Activated CD8-positive, alpha-beta T cell treated with anti-CD3 and anti-CD28 coated beads for 36 hours (primary cell): ENCODE measurements at regions of chr1 and their contacts with region 1.

Region 1: GRCh38 chr1:11907275-11908094 is 18.7 kb downstream of the KIAA2013 start:
- DNase-seq: peak; percentile 94
- ATAC-seq: peak; percentile 65
- H3K4me3 Mint-ChIP-seq: peak overlapping the region; percentile 90
- H3K27ac Mint-ChIP-seq: peak overlapping the region; percentile 96
- H3K4me1 Mint-ChIP-seq: peaks cover 29% of the 10 kb centered on the region
- H3K27me3 Mint-ChIP-seq: peaks cover 14% of the 10 kb centered on the region
- CTCF ChIP-seq: peak; percentile 65

Region 2: GRCh38 chr1:11590395-11590794 is 317.1 kb before region 1 on chr1:
- CTCF ChIA-PET with region 1: no interaction called
- POLR2A ChIA-PET with region 1: no interaction called
- intact Hi-C with region 1: no loop called
- DNase-seq: no peak
- ATAC-seq: no peak
- H3K4me3 Mint-ChIP-seq: no peak overlapping the region
- H3K27ac Mint-ChIP-seq: no peak overlapping the region
- H3K4me1 Mint-ChIP-seq: no peaks in the 10 kb centered on the region
- H3K27me3 Mint-ChIP-seq: peaks cover 8% of the 10 kb centered on the region
- CTCF ChIP-seq: no peak

Region 3: GRCh38 chr1:11654137-11654938 is 253.1 kb before region 1 on chr1 and contains the starts of genes FBXO2 and FBXO44:
- CTCF ChIA-PET with region 1: no interaction called
- POLR2A ChIA-PET with region 1: interaction called, 32 read pairs
- intact Hi-C with region 1: no loop called
- DNase-seq: peak; percentile 76
- ATAC-seq: peak; percentile 74
- H3K4me3 Mint-ChIP-seq: peak within 1 kb of the TSS; percentile 72
- H3K27ac Mint-ChIP-seq: peak within 1 kb of the TSS; percentile 42
- H3K4me1 Mint-ChIP-seq: peaks cover 25% of the 10 kb centered on the region
- H3K27me3 Mint-ChIP-seq: no peaks in the 10 kb centered on the region
- CTCF ChIP-seq: no peak
- total RNA-seq, gene FBXO2: 1.7 to 1.9 TPM
- total RNA-seq, gene FBXO44: 18.1 to 20.4 TPM

Region 4: DNA sequence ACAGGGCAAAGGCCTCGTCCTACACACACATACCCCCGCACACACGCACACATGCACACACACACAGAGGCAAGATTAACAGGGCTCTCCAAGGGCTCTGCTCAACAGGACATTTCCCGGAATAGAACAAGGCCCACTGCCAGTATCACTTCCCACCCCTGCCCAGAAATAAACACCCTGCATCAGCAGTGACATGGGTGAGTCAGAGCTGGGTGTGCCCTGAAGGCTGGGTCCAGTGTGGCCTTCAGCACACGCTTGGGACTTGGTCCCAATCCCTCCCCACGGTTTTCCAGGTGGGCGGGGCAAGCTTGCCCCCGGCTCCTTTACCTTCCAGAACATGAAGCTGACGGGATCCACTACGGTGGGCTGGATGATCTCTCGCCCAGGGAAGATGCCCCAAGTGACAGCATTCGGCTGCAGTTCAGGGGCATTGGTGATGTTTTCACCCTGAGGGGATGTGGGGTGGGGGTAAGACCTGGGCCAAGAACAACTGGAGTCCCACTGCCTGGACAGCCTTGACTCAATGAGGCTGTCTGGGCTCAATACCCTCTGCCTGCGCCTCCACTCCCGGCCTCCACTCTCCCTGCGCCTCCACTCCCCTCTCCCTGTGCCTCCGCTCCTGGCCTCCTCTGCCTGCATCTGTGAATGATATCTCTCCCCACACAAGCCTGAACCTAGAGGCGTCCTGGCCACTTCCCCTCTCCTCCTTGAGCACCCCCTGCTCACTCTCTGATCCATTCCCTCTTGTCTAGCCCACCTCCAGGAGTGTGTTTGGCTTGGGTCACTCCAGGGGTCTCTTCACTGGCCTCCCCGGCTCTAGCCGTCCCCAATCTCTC is 116.4 kb before region 1 on chr1:
- CTCF ChIA-PET with region 1: no interaction called
- POLR2A ChIA-PET with region 1: interaction called, 17 read pairs
- intact Hi-C with region 1: no loop called
- DNase-seq: no peak
- ATAC-seq: no peak
- H3K4me3 Mint-ChIP-seq: no peak overlapping the region
- H3K27ac Mint-ChIP-seq: peak overlapping the region; percentile 46
- H3K4me1 Mint-ChIP-seq: no peaks in the 10 kb centered on the region
- H3K27me3 Mint-ChIP-seq: no peaks in the 10 kb centered on the region
- CTCF ChIP-seq: no peak

Region 5: DNA sequence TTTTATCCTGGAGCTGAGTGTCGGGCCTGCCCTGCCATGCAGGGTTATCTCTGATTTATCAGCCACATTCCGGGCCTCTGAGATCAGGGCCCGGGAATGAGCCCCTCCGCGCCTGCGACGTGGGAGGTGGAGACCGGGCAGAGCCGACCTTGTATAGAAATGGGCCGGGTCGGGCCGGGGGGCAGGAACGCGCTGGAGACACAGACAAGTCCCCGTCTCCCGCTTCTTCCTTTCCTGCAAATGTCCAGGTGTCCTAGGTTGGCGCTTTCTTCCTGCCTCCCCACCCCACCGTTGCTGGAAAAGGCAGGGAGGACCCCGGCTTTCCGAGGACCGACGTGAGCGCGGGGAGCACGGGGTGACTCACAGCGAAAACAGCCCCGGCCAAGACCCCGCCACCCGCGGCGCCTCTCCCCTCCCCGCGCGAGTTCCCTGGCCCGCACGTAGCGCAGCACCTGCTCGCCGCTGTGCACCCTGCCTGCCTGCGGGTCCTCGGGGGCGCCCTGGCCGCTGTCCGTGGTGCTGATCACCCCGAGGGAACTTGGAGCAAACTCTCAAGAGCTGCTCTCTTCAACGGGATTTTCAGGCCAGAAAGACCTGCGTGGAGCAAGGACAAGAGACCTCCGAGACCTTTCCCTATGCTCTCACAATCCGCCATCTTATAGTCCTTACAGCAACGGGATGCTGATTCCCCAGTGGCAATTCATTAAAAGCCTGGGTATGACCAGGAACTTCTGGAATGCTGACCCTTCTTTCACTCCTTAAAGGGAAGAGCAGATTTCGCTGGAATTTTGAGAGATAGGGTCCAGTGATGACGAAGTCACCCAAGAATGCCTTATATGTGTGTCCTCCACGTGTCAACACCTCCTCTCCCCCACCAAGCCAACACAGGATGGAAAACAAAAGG is 48.3 kb before region 1 on chr1:
- CTCF ChIA-PET with region 1: no interaction called
- POLR2A ChIA-PET with region 1: interaction called, 68 read pairs
- intact Hi-C with region 1: no loop called
- DNase-seq: peak; percentile 83
- ATAC-seq: peak; percentile 91
- H3K4me3 Mint-ChIP-seq: no peak overlapping the region
- H3K27ac Mint-ChIP-seq: no peak overlapping the region
- H3K4me1 Mint-ChIP-seq: peaks cover 5% of the 10 kb centered on the region
- H3K27me3 Mint-ChIP-seq: peaks cover 46% of the 10 kb centered on the region
- CTCF ChIP-seq: peak; percentile 21

Region 6: GRCh38 chr1:11957398-11957797 is 49.9 kb after region 1 on chr1:
- CTCF ChIA-PET with region 1: no interaction called
- POLR2A ChIA-PET with region 1: interaction called, 13 read pairs
- intact Hi-C with region 1: no loop called
- DNase-seq: no peak
- ATAC-seq: no peak
- H3K4me3 Mint-ChIP-seq: no peak overlapping the region
- H3K27ac Mint-ChIP-seq: no peak overlapping the region
- H3K4me1 Mint-ChIP-seq: no peaks in the 10 kb centered on the region
- H3K27me3 Mint-ChIP-seq: no peaks in the 10 kb centered on the region
- CTCF ChIP-seq: no peak

Region 7: DNA sequence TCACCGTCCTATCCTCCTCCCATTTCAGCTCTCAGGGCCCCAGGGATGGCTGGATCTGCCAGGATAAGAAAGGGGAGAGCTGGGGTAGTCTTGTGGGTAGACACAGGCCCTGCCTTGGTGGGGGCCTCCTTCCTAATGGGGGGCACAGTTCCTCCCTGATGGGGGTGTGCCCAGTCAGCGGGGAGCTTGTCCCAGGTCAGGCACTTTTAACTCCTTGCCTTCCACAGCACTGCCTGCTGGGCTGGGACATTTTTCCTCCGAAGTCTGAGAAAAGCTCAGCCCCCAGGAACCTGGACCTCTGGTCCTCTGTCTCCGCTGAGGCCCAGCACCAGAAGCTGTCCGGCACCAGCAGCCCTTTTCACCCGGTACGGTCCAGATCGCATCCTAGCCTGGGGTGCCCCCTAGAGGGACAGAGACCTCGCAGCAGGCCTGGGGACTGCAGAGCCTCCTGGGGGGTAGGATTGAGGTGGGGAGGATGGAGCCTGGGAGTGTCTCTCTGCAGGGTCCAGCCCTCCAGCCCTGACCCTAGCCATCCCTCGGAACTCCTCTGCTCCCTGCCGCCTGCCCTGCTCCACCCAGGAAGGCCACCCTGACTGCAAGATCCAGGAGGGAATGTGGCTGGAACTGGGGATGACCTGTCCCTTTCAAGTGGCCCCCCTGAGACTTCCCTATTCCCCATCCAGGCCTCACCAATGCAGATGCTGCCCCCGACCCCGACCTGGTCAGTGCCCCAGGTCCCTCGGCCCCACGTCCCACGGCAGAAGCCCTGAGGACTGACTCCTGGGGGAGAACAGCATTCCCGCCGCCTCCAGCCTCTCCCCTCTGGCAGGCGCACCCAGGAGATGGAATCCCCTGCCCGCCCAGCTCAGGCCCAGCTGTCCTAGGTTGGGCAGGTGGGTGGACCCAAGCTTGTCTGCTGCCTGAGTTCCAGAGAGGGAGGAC is 123.8 kb after region 1 on chr1:
- CTCF ChIA-PET with region 1: interaction called, 4 read pairs
- POLR2A ChIA-PET with region 1: interaction called, 49 read pairs
- intact Hi-C with region 1: no loop called
- DNase-seq: peak; percentile 67
- ATAC-seq: peak; percentile 96
- H3K4me3 Mint-ChIP-seq: no peak overlapping the region
- H3K27ac Mint-ChIP-seq: no peak overlapping the region
- H3K4me1 Mint-ChIP-seq: no peaks in the 10 kb centered on the region
- H3K27me3 Mint-ChIP-seq: no peaks in the 10 kb centered on the region
- CTCF ChIP-seq: peak; percentile 69

Region 8: GRCh38 chr1:12124693-12125421 is 217.4 kb after region 1 on chr1:
- CTCF ChIA-PET with region 1: no interaction called
- POLR2A ChIA-PET with region 1: interaction called, 10 read pairs
- intact Hi-C with region 1: no loop called
- DNase-seq: peak; percentile 85
- ATAC-seq: peak; percentile 49
- H3K4me3 Mint-ChIP-seq: no peak overlapping the region
- H3K27ac Mint-ChIP-seq: peak overlapping the region; percentile 73
- H3K4me1 Mint-ChIP-seq: peaks cover 60% of the 10 kb centered on the region
- H3K27me3 Mint-ChIP-seq: peaks cover 8% of the 10 kb centered on the region
- CTCF ChIP-seq: peak; percentile 99

Region 9: DNA sequence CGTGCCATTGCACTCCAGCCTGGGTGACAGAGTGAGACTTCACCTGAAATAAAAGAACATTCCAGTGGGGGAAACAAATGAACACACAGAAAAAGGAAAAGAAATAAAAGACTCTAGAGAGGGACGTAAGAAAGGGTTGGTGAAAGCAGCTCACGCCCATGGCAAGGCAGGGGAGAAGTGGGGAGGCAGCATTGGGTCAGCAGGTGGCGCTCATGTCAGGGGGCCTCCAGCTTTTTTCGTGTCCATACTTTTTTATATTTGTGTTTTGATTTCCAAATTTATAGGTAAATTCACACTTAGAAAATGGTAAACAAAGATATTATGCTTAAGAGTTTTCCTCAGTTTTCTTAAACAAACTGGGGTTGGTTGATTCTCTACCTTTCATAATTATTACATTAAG is 367.9 kb after region 1 on chr1:
- CTCF ChIA-PET with region 1: no interaction called
- POLR2A ChIA-PET with region 1: no interaction called
- intact Hi-C with region 1: no loop called
- DNase-seq: peak; percentile 63
- ATAC-seq: no peak
- H3K4me3 Mint-ChIP-seq: no peak overlapping the region
- H3K27ac Mint-ChIP-seq: no peak overlapping the region
- H3K4me1 Mint-ChIP-seq: no peaks in the 10 kb centered on the region
- H3K27me3 Mint-ChIP-seq: no peaks in the 10 kb centered on the region
- CTCF ChIP-seq: peak; percentile 74